Common myeloid progenitor, CD34-positive (primary cell): ENCODE measurements at regions of chrX and their contacts with region 1.

Region 1: DNA sequence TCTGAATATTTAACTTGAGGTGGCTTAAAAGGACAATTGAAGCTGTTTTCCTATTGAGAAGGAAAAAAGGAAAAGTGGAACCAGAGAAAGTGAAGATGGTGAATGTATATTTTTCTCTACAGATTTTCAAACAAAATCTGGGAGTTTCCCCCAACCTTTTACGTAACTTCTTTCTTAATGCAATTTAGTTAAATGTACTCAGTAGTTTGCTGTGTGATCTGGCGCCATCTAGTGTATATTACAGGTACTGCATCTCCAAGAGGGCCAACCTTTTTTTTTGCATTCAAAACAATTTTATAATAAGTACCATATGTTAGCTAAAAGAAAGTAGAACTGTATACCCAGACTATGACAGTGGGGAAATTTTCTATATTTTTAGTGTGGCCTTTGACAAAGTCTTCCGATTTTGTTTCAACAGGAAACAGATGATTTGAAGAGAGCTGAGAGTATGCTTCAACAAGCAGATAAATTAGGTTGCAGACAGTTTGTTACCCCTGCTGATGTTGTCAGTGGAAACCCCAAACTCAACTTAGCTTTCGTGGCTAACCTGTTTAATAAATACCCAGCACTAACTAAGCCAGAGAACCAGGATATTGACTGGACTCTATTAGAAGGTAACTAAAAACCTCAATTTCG is 82.0 kb downstream of the PLS3 start:
- DNase-seq: peak; percentile 43 to 81 (median 71)
- H3K4me3 ChIP-seq: no peak overlapping the region
- H3K27ac ChIP-seq: no peak overlapping the region
- H3K4me1 ChIP-seq: no peaks in the 10 kb centered on the region
- H3K27me3 ChIP-seq: peaks cover 0 to 6% (median 0%) of the 10 kb centered on the region in 5 experiments

Region 2: DNA sequence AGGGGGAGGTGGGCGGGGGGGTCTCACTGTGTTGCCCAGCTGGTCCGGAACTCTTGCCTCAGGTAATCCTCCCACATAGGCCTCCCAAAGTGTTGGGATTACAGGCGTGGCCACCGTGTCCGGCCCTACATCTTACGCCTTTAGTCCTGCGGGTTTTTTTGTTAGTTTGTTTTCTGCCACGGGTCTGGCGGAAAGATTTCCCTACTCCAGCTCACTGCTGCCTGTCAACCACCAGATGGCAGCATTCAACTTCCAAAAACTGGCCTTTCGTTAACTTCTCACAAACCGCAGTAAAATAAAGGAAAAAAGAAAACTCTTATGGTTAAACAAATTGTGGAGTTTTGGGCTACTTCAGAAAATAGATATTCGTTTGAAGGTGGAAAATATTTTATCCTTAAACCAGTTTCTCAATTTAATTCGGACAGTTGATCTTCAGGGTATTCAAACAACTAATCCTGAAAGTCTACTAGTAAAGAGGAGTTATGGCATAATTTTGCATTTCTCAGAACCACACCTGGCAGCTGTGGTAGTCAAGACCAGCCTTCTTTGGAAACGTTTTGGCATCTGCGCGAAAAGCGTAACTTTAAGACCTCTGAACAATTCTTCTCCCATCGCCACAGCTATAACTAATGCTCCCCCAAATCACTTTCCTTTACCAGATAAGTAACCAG is 312.4 kb before region 1 on chrX:
- CTCF ChIA-PET with region 1: interaction called, 24 read pairs
- POLR2A ChIA-PET with region 1: no interaction called
- DNase-seq: peak; percentile 54 to 76 (median 75)
- H3K4me3 ChIP-seq: peak overlapping the region in 1 of 7 experiments; percentile 48
- H3K27ac ChIP-seq: no peak overlapping the region
- H3K4me1 ChIP-seq: peaks cover 0 to 5% (median under 1%) of the 10 kb centered on the region in 4 experiments
- H3K27me3 ChIP-seq: no peaks in the 10 kb centered on the region

Region 3: DNA sequence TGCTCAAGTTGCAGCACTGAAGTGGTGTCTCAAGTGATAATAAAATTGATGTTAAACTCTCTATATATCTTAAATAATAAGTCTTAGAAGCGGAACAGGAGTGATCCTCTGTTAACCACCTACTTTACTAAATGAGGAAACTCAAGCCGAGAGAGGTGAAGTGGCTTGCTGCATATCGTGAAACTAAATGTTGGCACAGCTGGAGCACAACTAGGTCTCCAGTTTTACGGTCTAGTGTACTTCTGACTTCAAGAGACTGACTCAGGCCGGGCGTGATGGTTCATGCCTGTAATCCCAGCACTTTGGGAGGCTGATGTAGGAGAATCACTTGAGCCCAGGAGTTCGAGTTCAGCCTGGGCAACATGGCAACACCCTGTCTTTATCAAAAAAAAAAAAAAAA is 117.5 kb before region 1 on chrX:
- CTCF ChIA-PET with region 1: no interaction called
- POLR2A ChIA-PET with region 1: no interaction called
- DNase-seq: no peak
- H3K4me3 ChIP-seq: no peak overlapping the region
- H3K27ac ChIP-seq: no peak overlapping the region
- H3K4me1 ChIP-seq: no peaks in the 10 kb centered on the region
- H3K27me3 ChIP-seq: peaks cover 0 to 5% (median 0%) of the 10 kb centered on the region in 5 experiments

Region 4: DNA sequence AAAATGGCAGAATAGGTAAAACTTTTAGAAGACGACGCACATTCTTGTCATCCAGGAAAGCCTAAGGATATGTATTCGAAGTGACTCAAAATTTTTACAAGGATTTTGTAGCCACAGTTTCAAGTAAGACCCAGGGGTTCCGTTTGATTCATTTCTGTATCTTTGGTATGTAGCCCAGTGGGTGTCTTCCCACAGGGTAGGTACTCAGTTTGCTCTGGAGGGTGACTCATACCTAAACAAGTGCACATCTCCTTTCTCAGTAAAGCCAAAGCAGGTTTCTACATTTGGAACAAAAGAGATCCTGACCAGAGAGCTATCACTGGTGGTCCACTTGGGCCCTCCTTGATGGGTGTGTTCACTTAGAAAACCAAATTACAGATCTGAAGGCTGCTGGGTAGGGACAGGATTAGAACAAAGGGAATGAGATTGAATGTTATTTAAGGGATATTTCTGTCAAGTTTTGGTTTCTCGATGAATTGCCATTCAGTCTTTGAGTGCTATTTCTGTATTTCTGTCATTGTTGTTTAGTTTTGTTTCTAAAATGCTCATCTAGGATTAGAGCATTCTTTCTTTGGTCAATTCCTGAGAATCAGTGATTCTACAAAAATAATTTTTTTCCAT is 26.0 kb before region 1 on chrX:
- CTCF ChIA-PET with region 1: no interaction called
- POLR2A ChIA-PET with region 1: no interaction called
- DNase-seq: no peak
- H3K4me3 ChIP-seq: no peak overlapping the region
- H3K27ac ChIP-seq: no peak overlapping the region
- H3K4me1 ChIP-seq: peaks cover 0 to 9% (median 0%) of the 10 kb centered on the region in 4 experiments
- H3K27me3 ChIP-seq: peaks cover 0 to 19% (median 0%) of the 10 kb centered on the region in 5 experiments